Calu3 (cell line): ENCODE measurements at regions of chr16 and their contacts with region 1.

Region 1: DNA sequence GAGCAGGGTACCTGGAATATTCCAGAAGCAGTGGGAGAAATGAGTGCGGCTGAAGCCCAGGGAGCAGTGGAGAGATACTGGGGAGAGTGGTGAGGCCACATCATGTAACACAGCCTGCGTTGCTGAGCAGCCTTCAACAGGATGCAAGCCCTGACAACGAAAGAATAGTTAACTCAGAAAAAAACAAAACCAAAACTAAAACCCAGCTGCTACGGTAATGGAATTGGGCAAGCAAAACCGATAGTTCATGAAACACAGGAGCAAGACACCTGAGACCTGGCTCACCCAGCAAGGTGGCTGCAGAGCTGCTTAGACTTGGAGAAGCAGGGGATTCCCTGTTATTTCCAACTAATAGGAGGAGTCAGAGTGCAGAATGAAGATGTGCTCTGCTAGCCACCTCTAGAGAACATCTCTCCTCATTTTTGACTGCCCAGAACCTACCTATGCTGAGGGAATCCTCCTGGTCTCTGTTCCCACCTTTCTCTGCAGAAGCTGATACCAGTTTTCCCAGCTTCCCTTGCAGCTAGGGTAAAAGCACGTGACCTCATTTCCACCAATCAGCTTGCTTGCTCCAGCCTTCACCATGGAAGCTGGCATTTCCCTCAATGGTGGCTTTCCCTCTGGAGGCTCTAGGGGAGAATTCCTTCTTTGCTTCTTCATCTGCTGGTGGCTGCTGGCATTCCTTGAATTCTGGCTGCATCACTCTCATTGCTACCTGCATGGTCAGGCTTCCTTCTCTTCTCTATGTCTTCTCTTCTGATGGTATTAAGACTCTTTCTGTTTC is 59.4 kb upstream of the XYLT1 start:
- DNase-seq: no peak
- H3K4me3 Mint-ChIP-seq: no peak overlapping the region
- H3K27ac Mint-ChIP-seq: no peak overlapping the region
- H3K4me1 Mint-ChIP-seq: no peaks in the 10 kb centered on the region
- H3K27me3 Mint-ChIP-seq: peaks cover 29% of the 10 kb centered on the region
- CTCF ChIP-seq: no peak

Region 2: GRCh38 chr16:17556276-17557052 is 26.3 kb after region 1 on chr16:
- CTCF ChIA-PET with region 1: interaction called, 12 read pairs
- intact Hi-C with region 1: no loop called
- DNase-seq: no peak
- H3K4me3 Mint-ChIP-seq: no peak overlapping the region
- H3K27ac Mint-ChIP-seq: no peak overlapping the region
- H3K4me1 Mint-ChIP-seq: no peaks in the 10 kb centered on the region
- H3K27me3 Mint-ChIP-seq: no peaks in the 10 kb centered on the region
- CTCF ChIP-seq: peak; percentile 64